MCF 10A (cell line): ENCODE measurements at regions of chr1 and their contacts with region 1.

Region 1: DNA sequence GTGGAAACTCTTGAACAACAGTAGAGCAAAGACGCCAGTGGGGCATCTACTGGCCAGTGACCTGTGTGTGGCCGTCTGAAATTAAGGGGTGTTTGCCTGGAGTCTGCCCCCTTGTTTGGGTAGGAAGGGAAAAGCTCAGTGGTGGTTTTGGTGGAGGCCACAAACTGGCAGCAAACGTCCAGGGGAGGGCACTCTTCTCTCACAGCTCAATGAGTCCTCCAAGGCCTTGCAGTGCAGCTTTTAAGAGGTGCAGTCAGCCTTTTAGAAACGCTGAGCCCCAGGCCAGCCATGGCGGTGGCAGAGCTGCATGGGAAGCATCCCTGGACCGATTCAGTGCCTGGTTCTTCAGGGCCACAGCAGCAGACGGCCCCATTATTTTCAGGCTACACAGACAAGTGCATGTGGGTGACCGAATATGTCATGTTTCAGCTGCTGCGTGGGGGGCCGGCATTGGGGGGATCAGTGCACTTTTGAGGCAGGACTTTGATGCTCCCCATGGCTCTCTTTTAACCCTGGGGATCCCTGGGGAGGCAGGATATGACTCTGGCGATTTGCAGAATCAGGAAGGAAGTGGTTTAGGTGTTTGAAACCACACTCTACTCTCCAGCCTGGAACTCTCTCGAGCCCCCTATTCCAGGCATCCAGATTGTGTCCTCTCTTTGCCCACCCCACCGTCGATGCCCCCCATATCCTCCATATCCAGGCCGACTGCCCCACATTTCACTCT is 414.0 kb downstream of the PRDM2 start:
- DNase-seq: peak; percentile 65
- H3K4me3 Mint-ChIP-seq: no peak overlapping the region
- H3K27ac Mint-ChIP-seq: no peak overlapping the region
- H3K4me1 Mint-ChIP-seq: peaks cover 43% of the 10 kb centered on the region
- H3K27me3 Mint-ChIP-seq: no peaks in the 10 kb centered on the region
- CTCF ChIP-seq: peak; percentile 82

Region 2: GRCh38 chr1:14415395-14415794 is 301.4 kb after region 1 on chr1:
- CTCF ChIA-PET with region 1: interaction called, 6 read pairs
- POLR2A ChIA-PET with region 1: no interaction called
- intact Hi-C with region 1: loop called (anchors 1 kb)
- DNase-seq: peak; percentile 4
- H3K4me3 Mint-ChIP-seq: no peak overlapping the region
- H3K27ac Mint-ChIP-seq: no peak overlapping the region
- H3K4me1 Mint-ChIP-seq: peaks cover 9% of the 10 kb centered on the region
- H3K27me3 Mint-ChIP-seq: no peaks in the 10 kb centered on the region
- CTCF ChIP-seq: no peak

Region 3: GRCh38 chr1:14538335-14538734 is 424.3 kb after region 1 on chr1:
- CTCF ChIA-PET with region 1: interaction called, 3 read pairs
- POLR2A ChIA-PET with region 1: no interaction called
- intact Hi-C with region 1: loop called (anchors 5 kb)
- DNase-seq: no peak
- H3K4me3 Mint-ChIP-seq: no peak overlapping the region
- H3K27ac Mint-ChIP-seq: no peak overlapping the region
- H3K4me1 Mint-ChIP-seq: peaks cover 10% of the 10 kb centered on the region
- H3K27me3 Mint-ChIP-seq: no peaks in the 10 kb centered on the region
- CTCF ChIP-seq: no peak

Region 4: GRCh38 chr1:14850566-14850965 is 736.6 kb after region 1 on chr1:
- CTCF ChIA-PET with region 1: interaction called, 3 read pairs
- POLR2A ChIA-PET with region 1: no interaction called
- intact Hi-C with region 1: loop called (anchors 2 kb)
- DNase-seq: peak; percentile 30
- H3K4me3 Mint-ChIP-seq: no peak overlapping the region
- H3K27ac Mint-ChIP-seq: no peak overlapping the region
- H3K4me1 Mint-ChIP-seq: no peaks in the 10 kb centered on the region
- H3K27me3 Mint-ChIP-seq: peaks cover 25% of the 10 kb centered on the region
- CTCF ChIP-seq: no peak

Region 5: DNA sequence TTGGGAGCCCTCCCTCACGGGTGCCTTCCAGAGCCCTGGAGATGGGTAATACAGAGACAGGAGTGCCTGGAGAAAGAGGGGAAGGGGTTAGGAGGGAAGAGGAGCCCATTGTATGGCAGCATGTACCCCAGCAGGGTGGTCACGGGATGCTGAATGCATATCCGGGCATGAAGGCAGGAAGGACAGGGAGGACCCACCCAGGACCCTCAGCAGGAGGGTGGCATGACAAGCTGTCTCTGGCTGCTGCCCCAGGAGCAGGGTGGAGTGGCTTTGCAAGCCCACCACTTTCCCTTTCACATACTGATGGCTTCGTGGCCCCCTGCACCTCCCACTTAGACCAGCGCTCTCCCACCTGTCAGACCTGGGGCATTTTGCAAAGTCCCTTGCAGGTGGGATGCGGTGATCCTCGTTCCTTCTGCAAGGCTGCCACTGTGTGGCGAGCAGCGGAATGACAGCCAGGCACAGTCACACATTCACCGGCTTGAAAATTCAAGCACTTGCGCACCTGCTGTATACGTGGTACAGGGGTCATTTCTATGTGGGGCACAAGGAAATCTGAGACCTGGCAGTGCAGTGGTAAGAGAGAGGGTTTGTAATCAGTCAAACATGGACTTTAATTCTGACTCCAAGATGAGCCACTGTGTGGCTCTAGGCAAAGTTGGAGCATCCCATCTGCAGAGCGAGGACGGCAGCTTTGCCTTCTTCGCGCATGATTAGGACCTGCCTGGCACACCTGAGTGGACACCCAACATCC is 986.3 kb after region 1 on chr1:
- CTCF ChIA-PET with region 1: interaction called, 5 read pairs
- POLR2A ChIA-PET with region 1: no interaction called
- intact Hi-C with region 1: loop called (anchors 5 kb)
- DNase-seq: peak; percentile 49
- H3K4me3 Mint-ChIP-seq: no peak overlapping the region
- H3K27ac Mint-ChIP-seq: no peak overlapping the region
- H3K4me1 Mint-ChIP-seq: peaks cover 6% of the 10 kb centered on the region
- H3K27me3 Mint-ChIP-seq: peaks cover 38% of the 10 kb centered on the region
- CTCF ChIP-seq: peak; percentile 88